ENCODE measurements at regions of chr11 and their contacts with region 1.

Region 1: DNA sequence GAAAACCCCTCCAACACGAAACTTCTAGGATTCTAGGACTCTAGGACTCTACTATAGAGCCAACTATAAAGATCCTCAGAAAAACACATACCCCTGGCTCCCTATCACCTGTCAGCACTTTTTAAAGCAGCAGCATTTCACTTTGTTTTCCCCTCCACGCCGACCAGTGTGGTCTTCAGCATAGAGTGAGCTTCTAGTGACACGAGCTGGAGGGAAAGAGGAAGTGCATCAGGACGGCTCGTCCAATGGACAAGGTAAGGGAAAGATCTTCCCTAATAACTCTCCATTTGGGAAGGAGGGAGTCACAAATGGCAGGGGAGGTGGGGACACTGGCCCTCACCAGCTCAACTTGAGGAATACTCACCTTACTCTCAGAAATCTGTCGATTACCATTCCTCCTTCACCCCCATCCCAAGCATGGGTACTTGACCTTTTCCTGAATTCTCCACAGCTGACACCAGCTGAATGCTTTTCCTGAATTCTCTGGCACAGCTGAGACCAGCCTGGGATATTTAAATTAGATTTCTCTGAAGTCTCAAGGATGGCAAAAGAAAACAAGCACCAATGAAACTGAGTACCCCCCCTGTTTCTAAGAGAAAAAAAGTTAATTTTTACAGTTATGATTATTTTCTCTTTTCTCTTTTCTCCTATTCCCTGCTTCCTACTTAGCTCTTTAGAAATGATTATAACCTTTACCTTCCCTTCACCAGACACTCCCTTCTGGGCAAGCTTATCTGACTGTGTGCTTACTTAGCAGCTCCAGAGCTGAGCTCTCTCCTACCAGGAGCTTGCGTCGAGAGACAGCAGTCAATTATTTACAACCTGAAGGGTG is 33.3 kb upstream of the NNMT start:
- DNase-seq: peak in 4 of 5 donors; percentile 17 to 28 (median 21)
- H3K4me3 ChIP-seq: no peak overlapping the region
- H3K4me3 Mint-ChIP-seq: no peak overlapping the region
- H3K27ac ChIP-seq: no peak overlapping the region
- H3K27ac Mint-ChIP-seq: no peak overlapping the region
- H3K4me1 ChIP-seq: no peaks in the 10 kb centered on the region
- H3K4me1 Mint-ChIP-seq: peaks cover 0 to 3% (median 0%) of the 10 kb centered on the region in 4 donors
- H3K27me3 ChIP-seq: peaks cover 3% of the 10 kb centered on the region
- H3K27me3 Mint-ChIP-seq: peaks cover 0 to 6% of the 10 kb centered on the region in 2 donors

Region 2: GRCh38 chr11:113994077-113994954 is 268.6 kb before region 1 on chr11:
- CTCF ChIA-PET with region 1: interaction called, 320 read pairs
- POLR2A ChIA-PET with region 1: interaction called, 5 read pairs
- intact Hi-C with region 1: loop called (anchors 1 kb)
- DNase-seq: peak in 4 of 5 donors; percentile 18 to 33 (median 22)
- H3K4me3 ChIP-seq: no peak overlapping the region
- H3K4me3 Mint-ChIP-seq: no peak overlapping the region
- H3K27ac ChIP-seq: no peak overlapping the region
- H3K27ac Mint-ChIP-seq: no peak overlapping the region
- H3K4me1 ChIP-seq: no peaks in the 10 kb centered on the region
- H3K4me1 Mint-ChIP-seq: peaks cover 0 to 1% (median 0%) of the 10 kb centered on the region in 4 donors
- H3K27me3 ChIP-seq: no peaks in the 10 kb centered on the region
- H3K27me3 Mint-ChIP-seq: peaks cover 6 to 13% of the 10 kb centered on the region in 2 donors

Region 3: DNA sequence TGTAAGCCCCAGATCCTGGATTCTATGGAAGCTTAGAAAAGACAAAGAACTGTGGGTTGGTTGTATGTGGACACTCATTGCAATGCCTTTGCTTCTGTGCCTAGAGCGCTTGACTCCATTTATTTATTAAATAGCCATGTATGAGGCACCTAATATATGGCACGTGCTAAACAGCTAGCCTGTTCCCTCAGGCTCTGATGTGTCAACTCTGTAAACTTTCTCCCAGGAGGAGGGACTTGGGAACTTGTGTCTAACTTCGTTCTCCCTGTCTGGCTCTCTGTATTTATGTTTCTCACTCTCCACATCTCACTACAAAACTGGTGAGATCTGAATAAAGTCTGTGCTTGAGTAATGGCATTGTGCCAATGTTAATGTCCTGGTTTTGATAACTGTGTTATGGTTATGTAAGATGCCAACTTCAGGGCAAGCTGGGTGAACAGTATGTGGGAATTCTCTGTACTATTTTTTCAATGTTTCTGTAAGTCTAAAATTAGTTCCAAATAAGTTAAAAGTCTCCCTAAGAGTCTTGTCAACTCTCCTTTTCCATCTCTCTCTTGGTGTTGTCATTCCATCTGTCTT is 237.5 kb before region 1 on chr11:
- CTCF ChIA-PET with region 1: interaction called, 255 read pairs
- POLR2A ChIA-PET with region 1: no interaction called
- intact Hi-C with region 1: no loop called
- DNase-seq: no peak
- H3K4me3 ChIP-seq: no peak overlapping the region
- H3K4me3 Mint-ChIP-seq: no peak overlapping the region
- H3K27ac ChIP-seq: no peak overlapping the region
- H3K27ac Mint-ChIP-seq: no peak overlapping the region
- H3K4me1 ChIP-seq: peaks cover 5% of the 10 kb centered on the region
- H3K4me1 Mint-ChIP-seq: peaks cover 0 to 8% (median 2%) of the 10 kb centered on the region in 4 donors
- H3K27me3 ChIP-seq: no peaks in the 10 kb centered on the region
- H3K27me3 Mint-ChIP-seq: peaks cover 2 to 12% of the 10 kb centered on the region in 2 donors

Region 4: DNA sequence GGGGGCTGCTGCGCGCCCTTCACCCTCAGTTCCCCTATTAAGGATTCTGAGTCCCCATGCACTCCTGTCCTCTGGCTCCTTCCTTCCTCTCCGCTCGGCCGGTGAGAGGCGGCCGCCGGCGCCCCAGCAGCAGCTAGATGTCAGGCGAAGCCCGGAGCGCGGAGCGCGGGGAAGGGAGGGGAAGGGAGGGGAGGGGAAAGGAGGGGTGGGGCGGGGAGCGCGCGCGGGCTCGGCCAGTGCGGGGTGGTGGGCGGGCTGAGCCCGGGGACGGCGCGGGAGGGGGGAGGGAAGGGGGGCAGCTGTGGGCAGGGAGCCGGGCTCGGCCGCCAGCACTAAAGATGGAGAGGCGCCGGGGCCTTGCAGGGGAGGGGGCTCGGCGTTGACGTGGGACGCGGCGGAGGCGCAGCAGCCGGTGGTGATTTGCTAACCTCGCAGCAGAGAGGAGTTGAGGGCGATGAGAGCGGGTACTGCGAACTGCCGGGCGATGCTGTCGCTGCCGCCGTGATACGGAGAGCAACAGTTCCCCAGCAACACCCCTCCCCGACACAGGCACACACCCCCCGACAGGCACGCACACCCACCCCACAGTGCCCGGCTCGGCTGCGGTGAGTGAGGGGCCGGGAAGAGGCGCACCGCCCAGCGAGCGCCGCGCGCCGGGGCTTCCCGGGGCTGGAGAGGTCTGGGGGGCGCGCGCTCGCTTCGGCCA is 203.5 kb before region 1 on chr11 and contains the start of gene ZBTB16:
- CTCF ChIA-PET with region 1: interaction called, 66 read pairs
- POLR2A ChIA-PET with region 1: interaction called, 16 read pairs
- intact Hi-C with region 1: loop called (anchors 1 kb)
- DNase-seq: peak; percentile 59 to 76 (median 67)
- H3K4me3 ChIP-seq: peak within 1 kb of the TSS; percentile 52 to 57
- H3K4me3 Mint-ChIP-seq: peak within 1 kb of the TSS; percentile 87 to 97 (median 92)
- H3K27ac ChIP-seq: peak within 1 kb of the TSS; percentile 43
- H3K27ac Mint-ChIP-seq: peak within 1 kb of the TSS; percentile 55 to 91 (median 85)
- H3K4me1 ChIP-seq: peaks cover 17% of the 10 kb centered on the region
- H3K4me1 Mint-ChIP-seq: peaks cover 5 to 34% (median 16%) of the 10 kb centered on the region in 4 donors
- H3K27me3 ChIP-seq: peaks cover 16% of the 10 kb centered on the region
- H3K27me3 Mint-ChIP-seq: peaks cover 1 to 8% of the 10 kb centered on the region in 2 donors
- total RNA-seq, gene ZBTB16: 5.6 to 8.2 TPM

Region 5: DNA sequence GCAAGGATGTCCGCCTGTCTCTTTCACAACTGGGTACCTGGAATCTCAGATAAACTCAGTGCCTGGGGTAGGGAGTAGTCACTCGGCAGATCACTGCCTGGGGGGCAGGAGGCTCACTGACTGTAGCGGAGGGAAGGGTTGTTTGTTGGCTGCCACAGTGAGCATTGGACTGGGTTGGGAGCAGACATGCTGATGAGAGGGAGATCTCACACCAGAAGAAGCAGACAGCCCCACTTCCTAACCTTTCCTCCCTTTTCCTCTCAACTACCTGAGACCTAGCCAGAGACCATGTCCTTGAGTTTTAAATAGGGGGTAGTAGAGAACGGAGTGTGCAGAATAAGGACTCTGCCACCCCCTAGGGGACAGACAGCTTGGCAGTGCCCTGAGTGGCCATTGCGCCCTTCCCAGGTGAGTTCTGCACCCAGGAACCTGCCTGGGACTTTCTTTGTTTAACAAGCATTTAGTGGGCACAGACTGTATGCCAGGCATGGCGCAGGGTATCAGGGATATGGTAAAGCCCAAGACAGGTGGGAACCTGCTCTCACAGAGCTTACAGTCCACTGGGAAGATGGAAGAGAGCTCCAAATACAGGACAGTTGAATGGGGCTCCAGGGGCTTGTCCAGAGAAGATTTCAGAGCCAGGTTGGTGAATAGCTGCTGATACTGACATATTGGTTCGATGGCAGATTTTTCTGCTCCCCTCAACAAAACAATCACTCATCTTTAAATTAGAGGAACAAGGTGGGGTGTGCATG is 82.4 kb before region 1 on chr11:
- CTCF ChIA-PET with region 1: interaction called, 77 read pairs
- POLR2A ChIA-PET with region 1: interaction called, 3 read pairs
- intact Hi-C with region 1: no loop called
- DNase-seq: no peak
- H3K4me3 ChIP-seq: no peak overlapping the region
- H3K4me3 Mint-ChIP-seq: peak overlapping the region in 6 of 8 donors; percentile 17 to 60 (median 42)
- H3K27ac ChIP-seq: no peak overlapping the region
- H3K27ac Mint-ChIP-seq: peak overlapping the region in 3 of 7 donors; percentile 53 to 90 (median 79)
- H3K4me1 ChIP-seq: peaks cover 70% of the 10 kb centered on the region
- H3K4me1 Mint-ChIP-seq: peaks cover 60 to 92% (median 77%) of the 10 kb centered on the region in 4 donors
- H3K27me3 ChIP-seq: no peaks in the 10 kb centered on the region
- H3K27me3 Mint-ChIP-seq: no peaks in the 10 kb centered on the region

Region 6: DNA sequence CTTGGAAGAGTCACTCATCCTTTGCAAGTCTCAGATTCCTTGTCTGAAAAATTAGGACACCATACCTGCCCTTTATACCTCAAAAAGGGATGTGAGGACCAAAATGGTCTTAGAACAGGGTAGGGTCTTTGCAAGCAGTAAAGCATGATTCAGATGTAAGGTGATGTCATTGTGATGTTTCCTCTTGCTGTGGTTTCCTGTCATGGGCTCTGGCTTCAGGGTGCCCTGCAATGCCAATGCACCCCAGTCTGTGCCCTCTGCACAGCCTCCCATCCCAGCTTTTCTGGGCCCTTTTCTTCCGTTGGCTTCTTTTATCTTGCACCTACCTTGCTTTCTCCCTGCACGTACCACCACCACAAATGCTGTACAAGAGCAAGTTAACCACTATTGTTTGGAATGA is 54.5 kb before region 1 on chr11:
- CTCF ChIA-PET with region 1: interaction called, 15 read pairs
- POLR2A ChIA-PET with region 1: no interaction called
- intact Hi-C with region 1: no loop called
- DNase-seq: peak; percentile 31 to 60 (median 40)
- H3K4me3 ChIP-seq: peak overlapping the region in 1 of 2 donors; percentile 10
- H3K4me3 Mint-ChIP-seq: peak overlapping the region in 6 of 8 donors; percentile 0 to 62 (median 34)
- H3K27ac ChIP-seq: no peak overlapping the region
- H3K27ac Mint-ChIP-seq: peak overlapping the region; percentile 0 to 77 (median 44)
- H3K4me1 ChIP-seq: peaks cover 30% of the 10 kb centered on the region
- H3K4me1 Mint-ChIP-seq: peaks cover 23 to 51% (median 32%) of the 10 kb centered on the region in 4 donors
- H3K27me3 ChIP-seq: no peaks in the 10 kb centered on the region
- H3K27me3 Mint-ChIP-seq: no peaks in the 10 kb centered on the region

Region 7: GRCh38 chr11:114377612-114378267 is 114.8 kb after region 1 on chr11:
- CTCF ChIA-PET with region 1: no interaction called
- POLR2A ChIA-PET with region 1: no interaction called
- intact Hi-C with region 1: no loop called
- DNase-seq: no peak
- H3K4me3 ChIP-seq: no peak overlapping the region
- H3K4me3 Mint-ChIP-seq: no peak overlapping the region
- H3K27ac ChIP-seq: no peak overlapping the region
- H3K27ac Mint-ChIP-seq: no peak overlapping the region
- H3K4me1 ChIP-seq: no peaks in the 10 kb centered on the region
- H3K4me1 Mint-ChIP-seq: peaks cover 0 to 10% (median 2%) of the 10 kb centered on the region in 4 donors
- H3K27me3 ChIP-seq: no peaks in the 10 kb centered on the region
- H3K27me3 Mint-ChIP-seq: peaks cover 14 to 18% of the 10 kb centered on the region in 2 donors